Activated CD8-positive, alpha-beta T cell treated with anti-CD3 and anti-CD28 coated beads, Interleukin-2, amount 10 ng/mL, durations not matched to agents 7 days and 5 days (primary cell): ENCODE measurements at regions of chr2 and their contacts with region 1.

Region 1: GRCh38 chr2:147910990-147911473 is 66.2 kb downstream of the ACVR2A start:
- DNase-seq: peak; percentile 50
- ATAC-seq: no peak
- H3K4me3 Mint-ChIP-seq: no peak overlapping the region
- H3K27ac Mint-ChIP-seq: no peak overlapping the region
- H3K4me1 Mint-ChIP-seq: no peaks in the 10 kb centered on the region
- H3K27me3 Mint-ChIP-seq: no peaks in the 10 kb centered on the region

Region 2: DNA sequence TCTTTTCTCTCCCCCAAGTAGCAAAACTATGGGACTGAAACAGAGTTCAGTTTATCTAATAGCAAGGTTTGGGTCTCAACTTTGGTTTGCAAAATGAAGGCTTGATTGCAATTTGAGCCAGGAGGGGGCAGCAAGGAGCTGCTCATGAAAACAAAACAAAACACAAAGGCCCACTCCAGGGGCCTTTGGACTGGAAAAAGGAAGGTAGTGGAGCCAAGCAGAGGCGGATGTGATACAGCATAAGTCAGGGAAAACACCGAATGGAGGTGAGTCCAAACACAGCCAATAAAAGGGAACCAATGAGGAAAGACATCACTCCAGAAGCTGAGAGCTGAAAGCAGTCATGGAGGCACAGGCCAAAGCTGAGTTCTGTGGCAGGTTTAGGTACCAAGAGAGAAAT is 865.9 kb before region 1 on chr2:
- CTCF ChIA-PET with region 1: interaction called, 45 read pairs
- POLR2A ChIA-PET with region 1: no interaction called
- DNase-seq: peak; percentile 36
- ATAC-seq: no peak
- H3K4me3 Mint-ChIP-seq: no peak overlapping the region
- H3K27ac Mint-ChIP-seq: no peak overlapping the region
- H3K4me1 Mint-ChIP-seq: no peaks in the 10 kb centered on the region
- H3K27me3 Mint-ChIP-seq: peaks cover 2% of the 10 kb centered on the region

Region 3: GRCh38 chr2:147082850-147083522 is 828.0 kb before region 1 on chr2:
- CTCF ChIA-PET with region 1: interaction called, 68 read pairs
- POLR2A ChIA-PET with region 1: no interaction called
- DNase-seq: peak; percentile 67
- ATAC-seq: no peak
- H3K4me3 Mint-ChIP-seq: no peak overlapping the region
- H3K27ac Mint-ChIP-seq: no peak overlapping the region
- H3K4me1 Mint-ChIP-seq: no peaks in the 10 kb centered on the region
- H3K27me3 Mint-ChIP-seq: no peaks in the 10 kb centered on the region